ENCODE measurements at regions of chr1 and their contacts with region 1.

Region 1: GRCh38 chr1:151472856-151473731 is 13.8 kb upstream of the POGZ start:
- DNase-seq: peak; percentile 46
- H3K4me3 ChIP-seq: no peak overlapping the region
- H3K27ac ChIP-seq: no peak overlapping the region
- H3K4me1 ChIP-seq: peaks cover 6% of the 10 kb centered on the region
- H3K27me3 ChIP-seq: no peaks in the 10 kb centered on the region
- CTCF ChIP-seq: no peak

Region 2: DNA sequence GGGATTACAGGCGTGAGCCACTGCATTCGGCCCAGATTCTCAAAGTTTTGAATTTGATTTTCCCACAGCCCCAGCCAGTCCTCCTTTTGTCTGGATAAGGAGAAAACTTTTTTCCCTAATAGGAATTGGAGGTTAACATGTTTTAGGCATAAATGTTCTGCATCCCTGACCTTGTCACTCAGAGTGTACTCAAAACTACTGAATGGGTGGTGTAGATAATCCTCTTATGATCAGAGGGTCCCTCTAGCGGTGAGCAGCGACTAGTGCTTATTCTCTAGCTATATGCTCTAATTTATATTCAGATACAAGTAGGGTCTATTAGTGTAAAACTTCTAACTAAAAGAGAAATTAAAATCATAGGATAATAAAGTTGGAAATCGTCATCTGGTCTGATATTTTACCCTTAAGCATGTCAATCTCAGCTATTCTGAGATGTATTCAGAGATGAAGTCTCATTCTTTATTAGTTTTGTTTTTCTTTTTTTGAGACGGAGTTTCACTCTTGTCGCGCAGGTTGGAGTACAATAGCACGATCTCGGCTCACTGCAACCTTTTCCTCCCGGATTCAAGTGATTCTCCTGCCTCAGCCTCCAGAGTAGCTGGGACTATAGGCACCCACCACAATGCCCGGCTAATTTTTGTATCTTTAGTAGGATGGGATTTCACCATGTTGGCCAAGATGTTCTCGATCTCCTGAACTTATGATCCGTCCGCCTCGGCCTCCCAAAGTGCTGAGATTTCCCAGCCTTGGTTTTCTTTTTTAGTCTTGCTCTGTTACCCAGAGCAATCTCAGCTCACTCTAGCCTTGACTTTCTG is 221.2 kb before region 1 on chr1:
- CTCF ChIA-PET with region 1: no interaction called
- POLR2A ChIA-PET with region 1: no interaction called
- intact Hi-C with region 1: no loop called
- DNase-seq: peak; percentile 88
- H3K4me3 ChIP-seq: no peak overlapping the region
- H3K27ac ChIP-seq: peak overlapping the region; percentile 30
- H3K4me1 ChIP-seq: peaks cover 5% of the 10 kb centered on the region
- H3K27me3 ChIP-seq: no peaks in the 10 kb centered on the region
- CTCF ChIP-seq: peak; percentile 94

Region 3: GRCh38 chr1:151459331-151460046 is 13.6 kb before region 1 on chr1 and contains the start of gene POGZ:
- CTCF ChIA-PET with region 1: no interaction called
- POLR2A ChIA-PET with region 1: no interaction called
- intact Hi-C with region 1: loop called (anchors 2 kb)
- DNase-seq: peak; percentile 99
- H3K4me3 ChIP-seq: peak within 1 kb of the TSS; percentile 85
- H3K27ac ChIP-seq: peak within 1 kb of the TSS; percentile 92
- H3K4me1 ChIP-seq: peaks cover 15% of the 10 kb centered on the region
- H3K27me3 ChIP-seq: no peaks in the 10 kb centered on the region
- CTCF ChIP-seq: no peak
- total RNA-seq, gene POGZ: 98.4 and 102 TPM in 2 replicates